ENCODE measurements at regions of chr2 and their contacts with region 1.

Region 1: GRCh38 chr2:201071479-201072200 is at the starts of genes HYCC2 and NDUFB3:
- DNase-seq: peak; percentile 84 to 92
- H3K4me3 ChIP-seq: peak within 1 kb of the TSS; percentile 66
- H3K27ac ChIP-seq: peak within 1 kb of the TSS; percentile 72
- H3K4me1 ChIP-seq: peaks cover 18% of the 10 kb centered on the region
- H3K27me3 ChIP-seq: no peaks in the 10 kb centered on the region
- CTCF ChIP-seq: peak; percentile 37; the same call in 1 of the 2 replicates
- total RNA-seq, gene HYCC2: 8.8 and 10.7 TPM in 2 replicates
- total RNA-seq, gene NDUFB3: 93.1 and 96.7 TPM in 2 replicates

Region 2: DNA sequence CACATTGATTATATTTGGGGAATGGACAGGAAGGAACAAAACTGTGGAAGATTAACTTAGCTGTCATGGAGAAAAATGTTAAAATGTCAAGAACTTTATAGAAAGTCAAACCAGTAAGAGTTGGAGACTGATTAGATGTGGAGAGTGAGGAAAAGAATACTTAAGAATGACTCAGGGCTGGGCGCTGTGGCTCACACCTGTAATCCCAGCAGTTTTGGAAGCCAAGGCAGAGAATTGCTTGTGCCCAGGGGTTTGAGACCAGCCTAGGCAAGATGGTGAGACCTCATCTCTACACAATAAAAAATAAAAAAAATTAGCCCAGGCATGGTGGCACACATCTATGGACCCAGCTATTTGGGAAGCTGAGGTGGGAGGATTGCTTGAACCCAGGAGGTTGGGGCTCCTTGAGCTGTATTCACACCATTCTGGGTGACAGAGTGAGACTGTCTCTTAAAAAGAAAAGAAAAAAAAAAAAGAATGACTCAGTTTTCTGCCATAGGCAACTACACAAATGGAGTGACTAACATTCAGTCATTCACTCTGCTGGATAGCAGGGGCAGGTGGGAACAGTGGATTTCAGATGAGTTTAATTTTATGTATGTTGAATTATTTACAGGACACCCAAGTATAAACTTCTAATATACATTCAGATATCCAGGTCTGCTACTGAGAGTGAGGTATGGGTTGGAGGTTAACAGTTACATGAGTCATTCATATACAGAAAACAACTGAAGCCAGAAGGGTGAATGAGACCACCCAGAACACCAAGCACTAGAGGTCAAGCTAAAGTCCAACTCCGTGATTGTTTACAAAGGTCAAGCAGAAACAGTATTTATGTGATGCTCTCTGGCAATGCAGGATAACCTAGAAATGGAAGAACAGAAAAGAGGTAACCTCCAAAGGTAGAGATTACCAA is 142.0 kb before region 1 on chr2:
- CTCF ChIA-PET with region 1: interaction called, 4 read pairs
- POLR2A ChIA-PET with region 1: interaction called, 33 read pairs
- intact Hi-C with region 1: no loop called
- DNase-seq: no peak
- H3K4me3 ChIP-seq: no peak overlapping the region
- H3K27ac ChIP-seq: no peak overlapping the region
- H3K4me1 ChIP-seq: no peaks in the 10 kb centered on the region
- H3K27me3 ChIP-seq: no peaks in the 10 kb centered on the region
- CTCF ChIP-seq: no peak

Region 3: GRCh38 chr2:200963124-200963917 is 108.3 kb before region 1 on chr2 and contains the start of gene ORC2:
- CTCF ChIA-PET with region 1: interaction called, 8 read pairs
- POLR2A ChIA-PET with region 1: no interaction called
- intact Hi-C with region 1: loop called (anchors 5 kb)
- DNase-seq: peak; percentile 87 to 96
- H3K4me3 ChIP-seq: peak within 1 kb of the TSS; percentile 95
- H3K27ac ChIP-seq: peak within 1 kb of the TSS; percentile 76
- H3K4me1 ChIP-seq: peaks cover 51% of the 10 kb centered on the region
- H3K27me3 ChIP-seq: no peaks in the 10 kb centered on the region
- CTCF ChIP-seq: peak; percentile 65; the same call in 1 of the 2 replicates
- total RNA-seq, gene ORC2: 34.0 and 43.3 TPM in 2 replicates

Region 4: GRCh38 chr2:201151127-201151981 is 79.7 kb after region 1 on chr2:
- CTCF ChIA-PET with region 1: no interaction called
- POLR2A ChIA-PET with region 1: interaction called, 6 read pairs
- intact Hi-C with region 1: loop called (anchors 2 kb)
- DNase-seq: peak in 1 of 2 experiments; percentile 87
- H3K4me3 ChIP-seq: peak overlapping the region; percentile 23; the same call in 1 of the 2 replicates
- H3K27ac ChIP-seq: peak overlapping the region; percentile 97
- H3K4me1 ChIP-seq: peaks cover 46% of the 10 kb centered on the region
- H3K27me3 ChIP-seq: no peaks in the 10 kb centered on the region
- CTCF ChIP-seq: no peak

Region 5: GRCh38 chr2:201171259-201171814 is 99.7 kb after region 1 on chr2:
- CTCF ChIA-PET with region 1: no interaction called
- POLR2A ChIA-PET with region 1: no interaction called
- intact Hi-C with region 1: loop called (anchors 5 kb)
- DNase-seq: no peak
- H3K4me3 ChIP-seq: no peak overlapping the region
- H3K27ac ChIP-seq: no peak overlapping the region
- H3K4me1 ChIP-seq: no peaks in the 10 kb centered on the region
- H3K27me3 ChIP-seq: no peaks in the 10 kb centered on the region
- CTCF ChIP-seq: no peak

Region 6: DNA sequence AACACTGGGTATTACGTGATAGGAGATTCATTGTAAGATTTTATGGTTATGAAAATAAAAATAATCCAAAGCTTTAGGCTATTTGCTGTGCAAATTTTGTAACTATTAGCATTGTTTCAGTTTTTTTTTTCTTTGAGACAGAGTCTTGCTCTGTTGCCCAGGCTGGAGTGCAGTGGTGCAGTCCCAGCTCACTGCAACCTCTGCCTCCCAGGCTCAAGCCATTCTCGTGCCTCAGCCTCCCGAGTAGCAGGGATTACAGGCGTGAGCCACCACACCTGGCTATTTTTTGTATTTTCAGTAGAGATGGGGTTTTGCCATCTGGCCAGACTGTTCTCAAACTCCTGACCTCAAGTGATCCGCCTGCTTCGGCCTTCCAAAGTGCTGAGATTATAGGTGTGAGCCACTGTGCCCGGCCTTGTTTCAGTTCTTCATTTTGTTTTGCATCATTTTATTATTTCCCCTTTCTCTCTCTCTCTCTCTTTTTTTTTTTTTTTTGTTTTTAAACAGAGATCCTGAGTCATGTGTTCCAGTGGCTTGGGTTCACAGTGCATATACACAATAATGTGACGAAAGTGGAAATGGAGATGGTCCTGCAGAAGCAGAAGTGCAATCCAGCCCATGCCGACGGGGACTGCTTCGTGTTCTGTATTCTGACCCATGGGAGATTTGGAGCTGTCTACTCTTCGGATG is 137.1 kb after region 1 on chr2:
- CTCF ChIA-PET with region 1: no interaction called
- POLR2A ChIA-PET with region 1: no interaction called
- intact Hi-C with region 1: no loop called
- DNase-seq: no peak
- H3K4me3 ChIP-seq: no peak overlapping the region
- H3K27ac ChIP-seq: no peak overlapping the region
- H3K4me1 ChIP-seq: no peaks in the 10 kb centered on the region
- H3K27me3 ChIP-seq: no peaks in the 10 kb centered on the region
- CTCF ChIP-seq: no peak

Region 7: DNA sequence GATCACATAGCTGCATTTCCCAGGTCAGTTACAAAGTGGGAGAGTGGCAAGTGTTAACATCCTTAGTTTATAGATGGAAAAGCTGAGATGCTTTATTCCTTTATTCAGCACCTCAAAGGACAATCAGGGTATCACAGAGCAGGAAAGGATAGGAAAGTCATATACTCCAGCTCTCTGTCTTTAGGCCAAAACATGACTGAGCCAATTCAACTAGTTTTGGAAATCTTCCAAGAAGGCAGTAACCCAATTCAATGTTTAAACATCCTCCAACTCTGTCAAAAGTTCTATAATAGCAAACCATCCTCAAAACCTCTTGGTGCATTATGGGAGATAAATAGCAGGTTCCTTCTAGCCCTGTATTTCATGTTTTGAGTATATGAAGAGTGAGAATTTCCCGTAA is 213.9 kb after region 1 on chr2:
- CTCF ChIA-PET with region 1: no interaction called
- POLR2A ChIA-PET with region 1: no interaction called
- intact Hi-C with region 1: no loop called
- DNase-seq: no peak
- H3K4me3 ChIP-seq: no peak overlapping the region
- H3K27ac ChIP-seq: no peak overlapping the region
- H3K4me1 ChIP-seq: no peaks in the 10 kb centered on the region
- H3K27me3 ChIP-seq: no peaks in the 10 kb centered on the region
- CTCF ChIP-seq: no peak

Measured in PC-9 (cell line).